A549 (cell line): ENCODE measurements at regions of chr18 and their contacts with region 1.

Region 1: DNA sequence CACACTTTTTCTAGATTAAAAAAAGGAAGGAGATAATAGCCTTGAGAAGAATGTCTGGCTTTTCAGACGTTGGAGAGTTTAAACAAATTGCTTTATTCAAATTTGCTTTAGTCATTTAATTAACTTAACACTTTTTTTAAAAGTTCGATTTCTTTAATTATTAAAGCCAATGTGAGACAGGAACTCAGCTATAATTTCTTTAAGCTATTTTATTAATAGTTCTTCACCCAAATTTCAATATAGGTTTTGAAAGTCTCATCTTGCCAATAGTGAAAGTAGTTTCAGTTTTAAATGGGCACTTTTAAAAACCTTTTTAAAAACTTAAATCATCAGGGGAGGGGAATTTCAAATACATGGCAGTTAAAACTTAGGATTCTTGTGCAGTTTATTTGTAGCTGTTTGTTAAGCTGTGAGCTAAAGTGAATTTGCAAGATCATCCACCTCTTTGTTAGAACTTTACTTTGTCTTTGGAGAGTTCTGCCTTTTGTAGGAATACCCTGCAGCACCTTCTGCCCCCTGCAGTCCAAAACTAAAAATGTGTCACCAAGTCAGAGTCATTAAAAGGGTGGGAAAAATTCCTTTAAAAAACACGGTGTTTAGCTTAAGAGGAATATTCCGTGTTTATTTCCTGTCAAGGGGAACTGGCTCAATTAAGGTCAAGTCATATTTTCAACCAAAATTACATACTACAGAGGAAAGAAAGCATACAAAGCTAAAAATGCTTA is 4.6 kb downstream of the TGIF1 start:
- DNase-seq: peak in 1 of 2 experiments; percentile 80
- ATAC-seq: no peak
- H3K4me3 ChIP-seq: peak overlapping the region; percentile 93
- H3K27ac ChIP-seq: peak overlapping the region; percentile 98 to 100
- H3K4me1 ChIP-seq: peaks cover 26% of the 10 kb centered on the region
- CTCF ChIP-seq: peak; percentile 53
- EP300 ChIP-seq: no peak
- POLR2A ChIP-seq: no peak
- RAD21 ChIP-seq: peak; percentile 38 to 54; a peak in 4 of 5 replicates

Region 2: GRCh38 chr18:3281456-3282400 is 172.8 kb before region 1 on chr18:
- CTCF ChIA-PET with region 1: interaction called, 14 read pairs
- POLR2A ChIA-PET with region 1: interaction called, 3 read pairs
- DNase-seq: peak; percentile 55 to 78
- ATAC-seq: peak; percentile 54 to 83; a peak in 4 of 6 replicates
- H3K4me3 ChIP-seq: no peak overlapping the region
- H3K27ac ChIP-seq: peak overlapping the region; percentile 86 to 89
- H3K4me1 ChIP-seq: peaks cover 13% of the 10 kb centered on the region
- CTCF ChIP-seq: peak; percentile 64
- EP300 ChIP-seq: no peak
- POLR2A ChIP-seq: no peak
- RAD21 ChIP-seq: peak; percentile 84 to 86

Region 3: GRCh38 chr18:3493501-3494244 is 39.1 kb after region 1 on chr18:
- CTCF ChIA-PET with region 1: no interaction called
- POLR2A ChIA-PET with region 1: no interaction called
- DNase-seq: no peak
- ATAC-seq: no peak
- H3K4me3 ChIP-seq: no peak overlapping the region
- H3K27ac ChIP-seq: no peak overlapping the region
- H3K4me1 ChIP-seq: no peaks in the 10 kb centered on the region
- CTCF ChIP-seq: no peak
- EP300 ChIP-seq: no peak
- POLR2A ChIP-seq: no peak
- RAD21 ChIP-seq: no peak

Region 4: DNA sequence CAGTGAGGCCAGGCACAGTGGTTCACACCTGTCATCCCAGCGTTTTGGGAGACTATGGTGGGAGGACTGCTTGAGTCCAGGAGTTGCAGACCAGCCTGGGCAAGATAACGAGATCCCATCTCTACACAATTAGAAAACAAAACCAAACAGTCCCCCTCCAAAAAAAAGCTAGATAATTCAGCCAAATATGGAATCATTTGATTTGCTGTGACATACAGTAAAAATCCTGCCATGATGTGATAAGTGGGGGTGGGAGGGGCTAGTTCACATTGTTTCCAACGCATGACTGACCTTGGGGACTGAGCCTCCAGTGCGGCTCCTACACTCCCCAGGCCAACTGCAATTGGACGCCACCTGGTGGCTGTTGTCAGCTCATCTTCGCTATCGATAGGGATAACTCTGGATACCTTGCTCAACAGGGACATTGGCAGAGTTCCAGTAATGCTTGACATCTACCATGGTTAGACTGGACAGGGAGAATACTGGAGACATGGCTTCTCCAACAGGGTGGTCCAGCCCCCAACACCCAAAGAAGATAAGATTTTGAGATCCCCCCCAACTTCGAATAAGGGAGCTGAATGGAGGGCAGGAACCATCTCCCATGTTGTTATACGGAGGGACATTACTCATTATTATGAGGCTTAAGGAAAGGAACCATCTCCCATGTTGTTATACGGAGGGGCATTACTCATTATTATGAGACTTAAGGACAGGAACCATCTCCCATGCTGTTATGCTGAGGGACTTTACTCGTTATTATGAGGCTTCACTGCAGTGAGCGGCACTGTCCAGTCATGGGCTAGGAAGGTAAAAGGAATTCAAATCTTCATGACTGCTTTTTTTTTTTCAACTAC is 131.4 kb after region 1 on chr18:
- CTCF ChIA-PET with region 1: interaction called, 23 read pairs
- POLR2A ChIA-PET with region 1: interaction called, 3 read pairs
- DNase-seq: peak; percentile 64 to 89
- ATAC-seq: peak; percentile 95 to 96
- H3K4me3 ChIP-seq: no peak overlapping the region
- H3K27ac ChIP-seq: peak overlapping the region; percentile 63 to 77
- H3K4me1 ChIP-seq: peaks cover 34% of the 10 kb centered on the region
- CTCF ChIP-seq: peak; percentile 55
- EP300 ChIP-seq: no peak
- POLR2A ChIP-seq: no peak
- RAD21 ChIP-seq: peak; percentile 70 to 76

Region 5: DNA sequence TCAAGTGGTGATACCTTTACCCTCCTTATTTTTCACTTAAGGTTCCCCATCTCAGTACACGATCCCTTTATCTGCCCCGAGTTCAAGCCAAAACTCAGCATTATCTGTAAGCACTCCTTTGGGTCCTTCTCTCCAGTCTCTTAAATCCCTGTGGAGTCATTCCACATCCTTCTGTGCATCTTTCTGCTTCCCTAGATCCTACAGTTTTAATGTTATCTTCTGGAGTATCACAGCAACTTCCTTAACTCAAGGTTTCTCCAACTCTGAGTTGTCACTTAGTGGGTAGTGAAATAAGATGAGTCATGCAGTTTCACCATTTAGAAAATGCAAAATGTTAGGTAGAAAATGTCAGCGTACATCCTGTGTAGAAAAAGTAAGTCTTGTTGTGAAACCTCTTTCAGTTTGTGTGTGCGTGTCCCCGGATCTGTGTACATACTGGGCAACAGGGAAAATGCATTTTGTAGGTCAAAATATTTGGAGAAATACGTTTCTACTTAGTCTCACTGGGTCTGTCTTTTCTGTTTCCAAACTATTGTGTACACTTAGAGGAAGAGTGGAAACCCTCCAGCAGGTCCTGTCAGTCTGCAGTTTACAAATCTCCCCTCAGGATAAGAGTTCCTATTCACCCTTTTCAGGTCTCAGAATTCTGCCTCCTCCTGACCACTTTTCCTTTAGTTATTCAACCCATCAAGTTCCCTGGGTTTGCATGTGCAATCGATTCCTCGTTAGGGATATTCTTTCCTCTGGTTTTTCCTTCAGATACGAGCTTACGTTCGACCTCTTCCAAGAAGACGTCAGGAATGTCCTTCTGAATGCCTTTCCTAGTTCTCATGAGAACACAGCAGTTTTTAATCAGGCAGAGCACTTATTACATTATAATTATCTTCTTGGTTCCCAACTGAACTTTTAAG is 150.2 kb after region 1 on chr18:
- CTCF ChIA-PET with region 1: interaction called, 21 read pairs
- POLR2A ChIA-PET with region 1: interaction called, 48 read pairs
- DNase-seq: peak in 1 of 2 experiments; percentile 94
- ATAC-seq: peak; percentile 48 to 60
- H3K4me3 ChIP-seq: peak overlapping the region; percentile 46
- H3K27ac ChIP-seq: peak overlapping the region; percentile 99 to 100
- H3K4me1 ChIP-seq: peaks cover 58% of the 10 kb centered on the region
- CTCF ChIP-seq: no peak
- EP300 ChIP-seq: peak; percentile 87 to 95; a peak in 4 of 5 replicates
- POLR2A ChIP-seq: no peak
- RAD21 ChIP-seq: no peak; a peak in 1 of 5 replicates

Region 6: GRCh38 chr18:3623769-3624545 is 169.4 kb after region 1 on chr18:
- CTCF ChIA-PET with region 1: interaction called, 4 read pairs
- POLR2A ChIA-PET with region 1: interaction called, 10 read pairs
- DNase-seq: peak; percentile 69 to 99
- ATAC-seq: peak; percentile 86 to 87
- H3K4me3 ChIP-seq: peak overlapping the region; percentile 32; the same call in 2 of the 3 replicates
- H3K27ac ChIP-seq: peak overlapping the region; percentile 99 to 100
- H3K4me1 ChIP-seq: peaks cover 60% of the 10 kb centered on the region
- CTCF ChIP-seq: no peak
- EP300 ChIP-seq: peak; percentile 95 to 99
- POLR2A ChIP-seq: peak; percentile 42; the same call in 1 of the 2 replicates
- RAD21 ChIP-seq: peak; percentile 20 to 38; a peak in 4 of 5 replicates

Region 7: DNA sequence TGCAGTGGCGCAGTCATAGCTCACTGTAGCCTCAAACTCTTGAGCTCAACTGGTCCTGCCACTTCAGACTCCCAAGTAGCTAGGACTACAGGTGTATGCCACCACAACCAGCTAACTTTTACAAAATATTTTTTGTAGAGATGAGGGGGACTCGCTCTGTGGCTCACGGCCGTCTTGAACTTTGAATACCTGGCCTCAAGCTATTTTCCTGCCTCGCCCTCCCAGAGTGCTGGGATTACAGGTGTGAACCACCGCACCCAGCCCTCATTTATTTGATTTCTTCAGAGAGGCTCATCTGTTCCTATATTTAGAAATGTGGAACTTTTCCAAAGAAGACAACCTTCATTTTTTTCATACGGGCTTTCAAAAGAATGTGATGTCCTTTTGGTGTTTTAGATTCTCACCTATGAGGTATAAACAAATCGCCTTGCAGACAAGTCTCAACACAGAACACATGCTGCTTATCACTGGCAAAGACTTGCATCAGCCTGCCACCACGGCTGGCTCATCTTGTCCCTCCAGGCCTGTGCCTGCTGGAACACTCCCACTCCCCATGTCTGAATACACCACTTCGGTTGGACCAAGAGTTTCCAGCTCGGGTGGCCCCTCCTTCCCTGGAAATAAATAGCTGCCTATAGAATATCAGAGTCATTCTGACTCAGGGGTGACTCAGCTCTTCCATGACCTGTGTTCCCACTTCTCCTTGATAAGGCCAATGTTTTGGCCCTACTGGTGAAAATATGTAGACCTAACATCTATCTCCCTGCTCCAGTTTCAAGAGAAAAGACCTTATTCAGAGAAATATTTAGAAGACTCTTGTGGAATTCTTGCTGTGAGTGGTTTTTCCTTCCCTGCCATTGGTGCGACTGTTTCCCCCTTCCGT is 198.1 kb after region 1 on chr18:
- CTCF ChIA-PET with region 1: interaction called, 4 read pairs
- POLR2A ChIA-PET with region 1: interaction called, 16 read pairs
- DNase-seq: peak; percentile 89 to 99
- ATAC-seq: peak; percentile 86 to 88
- H3K4me3 ChIP-seq: peak overlapping the region; percentile 51
- H3K27ac ChIP-seq: peak overlapping the region; percentile 99 to 100
- H3K4me1 ChIP-seq: peaks cover 63% of the 10 kb centered on the region
- CTCF ChIP-seq: no peak
- EP300 ChIP-seq: peak; percentile 60 to 88; a peak in 3 of 5 replicates
- POLR2A ChIP-seq: peak; percentile 29; the same call in 1 of the 2 replicates
- RAD21 ChIP-seq: peak in 1 of 2 experiments; percentile 5; a peak in 1 of 5 replicates